ENCODE measurements at regions of chr4 and their contacts with region 1.

Region 1: GRCh38 chr4:77203380-77204197 is 46.6 kb downstream of the CCNG2 start:
- DNase-seq: peak; percentile 68
- H3K4me3 Mint-ChIP-seq: no peak overlapping the region
- H3K27ac Mint-ChIP-seq: no peak overlapping the region
- H3K4me1 Mint-ChIP-seq: peaks cover 6% of the 10 kb centered on the region
- H3K27me3 Mint-ChIP-seq: no peaks in the 10 kb centered on the region

Region 2: GRCh38 chr4:76511947-76512346 is 691.6 kb before region 1 on chr4:
- CTCF ChIA-PET with region 1: interaction called, 8 read pairs
- POLR2A ChIA-PET with region 1: no interaction called
- intact Hi-C with region 1: loop called (anchors 5 kb)
- DNase-seq: no peak
- H3K4me3 Mint-ChIP-seq: no peak overlapping the region
- H3K27ac Mint-ChIP-seq: no peak overlapping the region
- H3K4me1 Mint-ChIP-seq: no peaks in the 10 kb centered on the region
- H3K27me3 Mint-ChIP-seq: no peaks in the 10 kb centered on the region

Region 3: DNA sequence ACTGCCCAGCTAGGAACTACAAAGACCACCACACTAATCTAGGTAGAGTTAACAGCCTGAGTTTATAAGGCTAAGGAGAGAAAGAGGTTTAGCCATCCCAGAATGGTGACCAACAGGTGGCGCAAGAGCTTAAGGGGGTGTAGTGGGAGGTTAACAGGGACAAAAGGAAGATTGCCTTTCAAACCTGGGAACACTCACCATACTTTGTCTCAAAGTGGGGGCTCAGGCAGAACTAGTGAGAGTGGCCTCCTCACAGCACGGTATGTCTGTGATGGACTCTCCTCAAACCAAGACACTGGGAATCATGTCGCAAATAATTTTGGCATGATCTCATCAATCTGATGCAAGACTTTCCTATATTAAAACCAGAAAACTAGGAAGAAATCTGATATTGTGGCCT is 151.2 kb before region 1 on chr4:
- CTCF ChIA-PET with region 1: interaction called, 49 read pairs
- POLR2A ChIA-PET with region 1: no interaction called
- intact Hi-C with region 1: loop called (anchors 1 kb)
- DNase-seq: peak; percentile 69
- H3K4me3 Mint-ChIP-seq: no peak overlapping the region
- H3K27ac Mint-ChIP-seq: peak overlapping the region; percentile 34
- H3K4me1 Mint-ChIP-seq: no peaks in the 10 kb centered on the region
- H3K27me3 Mint-ChIP-seq: no peaks in the 10 kb centered on the region

Region 4: DNA sequence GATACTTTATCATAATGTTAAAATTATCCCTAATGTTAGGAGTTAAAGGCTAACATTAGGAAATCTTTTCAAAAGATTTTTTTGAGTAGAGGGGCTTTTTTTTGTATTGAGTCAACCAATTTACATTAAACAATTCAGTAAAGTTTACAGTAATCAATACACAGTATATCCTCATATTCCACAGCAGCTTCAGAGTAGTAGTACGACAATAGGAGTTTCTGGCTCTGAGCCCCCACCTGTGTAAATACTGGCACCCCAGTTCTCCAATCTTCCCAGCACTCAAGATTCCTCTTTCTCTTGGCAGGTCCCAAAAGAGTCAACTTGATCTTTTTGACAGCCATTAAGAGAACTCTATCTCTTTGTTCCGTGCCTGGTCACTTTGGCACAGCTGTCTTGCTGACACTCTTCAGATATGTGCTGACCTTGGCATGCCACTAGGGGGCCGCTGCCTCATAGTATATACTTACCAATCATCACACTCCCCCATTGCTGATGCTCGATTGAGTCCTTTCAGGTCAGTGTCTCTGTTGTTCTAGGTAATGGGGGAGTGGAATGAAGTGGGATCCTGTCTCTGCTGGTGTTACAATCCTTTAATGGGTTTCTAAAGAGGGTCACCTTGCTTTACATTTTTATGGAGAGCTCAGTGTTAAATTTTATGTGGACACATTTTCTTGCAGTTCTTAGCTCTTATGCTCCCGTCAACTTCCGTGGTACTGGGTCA is 108.3 kb before region 1 on chr4:
- CTCF ChIA-PET with region 1: interaction called, 252 read pairs
- POLR2A ChIA-PET with region 1: no interaction called
- intact Hi-C with region 1: loop called (anchors 1 kb)
- DNase-seq: peak; percentile 83
- H3K4me3 Mint-ChIP-seq: no peak overlapping the region
- H3K27ac Mint-ChIP-seq: no peak overlapping the region
- H3K4me1 Mint-ChIP-seq: peaks cover 14% of the 10 kb centered on the region
- H3K27me3 Mint-ChIP-seq: no peaks in the 10 kb centered on the region

Region 5: DNA sequence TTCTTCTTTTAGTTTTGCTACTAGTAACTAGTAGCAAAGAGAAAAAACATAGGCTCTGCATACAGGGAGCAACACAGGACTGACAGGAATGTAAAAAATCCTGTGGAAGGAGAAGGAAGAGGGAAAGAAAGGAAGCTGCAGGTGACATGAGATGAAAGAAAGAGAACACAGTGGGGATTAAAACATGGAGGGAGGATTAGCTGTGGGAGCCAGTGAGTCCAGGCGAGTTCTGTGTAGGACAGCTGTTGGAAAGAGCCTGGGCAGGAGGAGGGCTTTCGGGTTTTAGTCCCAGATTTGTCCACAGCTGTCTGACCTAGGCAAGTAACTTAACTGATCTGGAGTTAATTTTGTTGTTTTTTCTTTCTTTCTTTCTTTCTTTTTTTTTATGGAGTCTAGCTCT is 25.0 kb before region 1 on chr4:
- CTCF ChIA-PET with region 1: interaction called, 10 read pairs
- POLR2A ChIA-PET with region 1: no interaction called
- intact Hi-C with region 1: no loop called
- DNase-seq: no peak
- H3K4me3 Mint-ChIP-seq: no peak overlapping the region
- H3K27ac Mint-ChIP-seq: no peak overlapping the region
- H3K4me1 Mint-ChIP-seq: no peaks in the 10 kb centered on the region
- H3K27me3 Mint-ChIP-seq: peaks cover 6% of the 10 kb centered on the region

Measured in activated CD4-positive, alpha-beta memory T cell treated with anti-CD3 and anti-CD28 coated beads for 36 hours (primary cell).